G401 (cell line): ENCODE measurements at regions of chr19 and their contacts with region 1.

Region 1: DNA sequence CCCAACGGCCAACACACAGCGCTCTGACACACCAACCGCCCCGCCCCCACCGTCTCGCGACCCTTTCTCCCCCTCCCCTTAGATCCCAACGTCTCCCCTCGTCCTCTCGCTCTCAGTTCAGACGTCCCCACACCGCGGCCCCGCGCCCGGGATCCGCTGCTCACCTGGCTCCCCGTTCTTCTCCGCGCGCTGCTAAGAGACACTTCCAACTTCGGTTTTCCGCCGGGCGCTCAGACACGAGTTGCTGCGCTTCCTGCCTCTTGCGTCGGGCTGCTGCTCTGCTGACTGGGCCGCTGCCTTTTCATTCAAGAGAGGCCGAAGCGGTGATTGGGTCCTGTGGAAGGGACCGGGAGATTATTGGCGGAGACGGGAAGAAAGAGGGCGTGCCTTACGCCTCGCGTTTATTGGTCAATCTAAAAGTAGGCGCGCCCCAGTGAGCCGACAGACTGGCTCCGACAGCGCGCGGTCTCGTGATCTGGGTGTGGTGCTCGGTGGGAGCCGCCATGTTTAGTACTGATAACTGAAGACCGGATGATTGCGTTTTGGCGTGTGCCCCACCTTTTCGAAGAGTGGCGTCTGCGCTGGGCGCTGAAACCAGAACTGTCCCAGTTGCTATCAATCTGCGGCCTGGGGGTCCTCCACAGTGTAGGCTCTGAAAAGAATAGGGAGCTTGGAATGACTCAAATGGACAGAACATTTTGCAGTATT is at the start of gene DDX39A:
- DNase-seq: peak; percentile 99
- total RNA-seq, gene DDX39A: 181 and 204 TPM in 2 replicates

Region 2: DNA sequence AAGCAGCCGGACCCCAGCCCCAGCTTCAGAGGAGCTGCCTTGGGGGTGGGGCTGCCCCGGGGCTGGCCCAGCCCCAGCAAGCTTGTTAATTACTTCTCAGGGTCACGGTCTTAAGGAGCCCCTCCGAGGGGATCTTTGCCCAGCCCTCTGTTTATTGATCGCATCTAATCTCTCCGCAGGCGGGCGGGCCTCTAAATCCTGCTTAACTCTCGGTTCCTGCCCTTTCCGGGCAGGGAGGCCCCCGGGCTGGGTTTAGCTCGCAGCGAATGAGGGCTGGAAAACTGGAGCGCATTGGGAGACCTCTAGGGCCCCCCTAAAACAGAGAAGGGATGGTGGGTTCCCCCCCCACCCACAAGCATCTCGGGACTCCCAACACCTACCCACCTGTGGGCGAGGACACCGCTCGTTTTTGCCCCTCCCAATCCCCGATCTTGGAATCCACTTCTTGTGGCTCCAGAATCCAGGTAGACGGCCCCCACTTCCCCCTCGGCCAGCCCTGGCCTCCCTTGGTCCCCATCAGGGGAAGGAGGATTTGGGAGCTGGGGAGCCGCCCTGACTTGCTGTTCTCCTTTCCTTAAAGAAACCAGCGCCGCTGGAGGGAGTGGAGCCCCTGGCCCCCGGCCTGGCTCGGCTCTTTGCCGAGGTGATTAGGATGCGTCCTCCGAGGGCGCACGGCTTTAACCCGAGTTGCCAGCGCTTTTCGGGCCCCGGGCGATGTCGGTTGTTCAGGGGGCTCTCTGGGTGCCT is 153.8 kb before region 1 on chr19:
- in situ Hi-C with region 1: loop called (anchors 10 kb)
- DNase-seq: no peak

Region 3: DNA sequence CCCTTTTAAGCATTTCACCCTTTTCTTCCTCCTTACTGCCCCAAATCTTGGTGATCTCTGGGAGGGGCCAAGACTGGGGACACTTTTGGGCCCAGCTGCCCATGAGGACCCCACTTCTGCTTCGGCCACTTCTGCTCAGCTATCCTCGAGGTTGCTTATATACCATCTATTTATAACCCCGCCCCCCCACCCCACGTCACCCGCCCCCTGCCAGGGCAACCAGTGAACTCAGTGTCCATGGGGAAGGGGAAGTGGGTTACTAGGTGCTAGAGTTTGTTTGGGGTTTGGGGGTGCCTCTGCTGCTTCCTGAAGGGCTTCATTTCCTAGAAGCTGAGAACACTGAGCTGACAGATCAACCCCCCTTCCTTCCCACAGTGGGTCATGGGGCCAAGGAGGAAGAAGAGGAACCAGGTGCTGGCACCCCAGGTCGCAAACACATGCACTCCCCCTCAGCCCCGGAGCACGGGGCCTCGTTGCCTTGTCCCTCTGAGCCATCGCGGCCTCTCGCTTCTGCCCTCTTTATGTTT is 44.1 kb before region 1 on chr19:
- in situ Hi-C with region 1: no loop called
- DNase-seq: no peak

Region 4: DNA sequence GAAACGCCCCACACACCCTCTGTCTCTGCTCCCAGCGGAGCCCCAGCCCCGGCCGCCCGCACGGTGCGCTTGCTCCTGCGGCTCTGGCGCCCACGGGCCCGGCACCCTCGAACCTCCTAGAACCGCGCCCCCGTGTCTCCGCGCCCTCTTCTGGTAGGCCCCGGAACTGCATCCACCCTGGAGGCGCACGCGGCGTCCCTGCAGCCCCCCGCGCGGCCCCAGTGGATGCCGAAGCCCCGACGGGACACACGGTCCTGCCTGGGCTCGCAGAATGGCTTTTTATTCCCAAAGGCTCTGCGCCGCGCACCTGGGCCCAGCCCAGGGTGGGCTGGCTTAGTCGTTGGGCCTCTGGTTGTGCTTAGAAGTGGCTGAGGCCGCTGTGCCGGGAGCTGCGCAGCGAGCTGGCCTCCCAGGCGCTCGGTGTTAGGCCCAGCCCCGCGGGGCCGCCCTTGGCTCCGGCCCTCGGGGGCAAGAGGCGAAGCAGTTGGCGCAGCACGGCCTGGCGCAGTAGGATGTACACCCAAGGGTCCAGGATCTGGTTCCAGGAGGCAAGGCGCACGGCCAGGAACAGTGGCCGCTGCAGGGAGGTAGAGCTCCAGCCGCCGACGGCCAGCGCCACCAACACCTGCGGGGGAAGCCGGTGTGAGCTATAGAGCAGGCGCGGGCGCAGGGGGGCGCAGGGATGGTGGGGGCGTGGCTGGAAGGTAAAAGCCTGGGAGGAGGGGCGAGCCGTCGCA is 53.1 kb after region 1 on chr19:
- in situ Hi-C with region 1: no loop called
- DNase-seq: peak; percentile 48